IMR-90 (cell line): ENCODE measurements at regions of chr2 and their contacts with region 1.

Region 1: DNA sequence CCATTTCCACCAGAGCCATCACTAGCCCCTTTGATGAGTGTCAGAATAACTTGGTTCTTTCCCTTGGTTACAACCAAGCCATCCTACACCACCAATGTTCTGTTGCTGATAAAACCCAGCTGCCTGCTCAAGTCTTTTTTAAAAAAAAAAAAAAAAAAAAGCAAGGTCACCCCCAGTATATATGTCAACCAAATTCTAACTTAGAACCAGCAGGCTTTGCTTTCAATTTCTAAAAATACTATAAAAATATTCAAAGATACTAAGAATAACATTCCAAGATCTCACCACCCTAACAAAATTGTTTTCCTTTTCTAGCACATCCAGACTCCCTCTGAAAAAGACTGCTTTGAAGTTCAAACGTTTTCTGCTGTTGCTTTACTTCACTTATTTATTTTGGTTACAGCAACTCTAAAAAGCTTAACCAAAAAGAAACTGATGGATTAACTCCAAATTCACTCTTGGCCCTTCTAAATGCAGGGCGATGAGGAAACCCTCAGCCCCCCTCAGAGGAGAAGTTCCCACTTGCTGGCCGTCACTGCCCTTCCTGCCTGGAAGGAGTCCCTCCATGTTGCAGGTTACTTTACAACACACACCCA is 10.9 kb downstream of the UXS1 start:
- DNase-seq: peak; percentile 15
- ATAC-seq: peak; percentile 61
- H3K4me3 ChIP-seq: no peak overlapping the region
- H3K27ac ChIP-seq: no peak overlapping the region
- H3K4me1 ChIP-seq: peaks cover 5% of the 10 kb centered on the region
- H3K27me3 ChIP-seq: no peaks in the 10 kb centered on the region
- CTCF ChIP-seq: no peak
- POLR2A ChIP-seq: no peak
- RAD21 ChIP-seq: no peak

Region 2: GRCh38 chr2:106065268-106065982 is 117.8 kb before region 1 on chr2:
- CTCF ChIA-PET with region 1: no interaction called
- POLR2A ChIA-PET with region 1: no interaction called
- dilution Hi-C with region 1: no loop called
- in situ Hi-C with region 1: no loop called
- intact Hi-C with region 1: no loop called
- DNase-seq: no peak
- ATAC-seq: no peak; the same call in 1 of the 2 replicates
- H3K4me3 ChIP-seq: no peak overlapping the region; the same call in 1 of the 2 replicates
- H3K27ac ChIP-seq: no peak overlapping the region
- H3K4me1 ChIP-seq: no peaks in the 10 kb centered on the region
- H3K27me3 ChIP-seq: peaks cover 49% of the 10 kb centered on the region
- CTCF ChIP-seq: no peak
- POLR2A ChIP-seq: no peak
- RAD21 ChIP-seq: no peak

Region 3: GRCh38 chr2:106208874-106209273 is 25.7 kb after region 1 on chr2:
- CTCF ChIA-PET with region 1: no interaction called
- POLR2A ChIA-PET with region 1: no interaction called
- dilution Hi-C with region 1: no loop called
- in situ Hi-C with region 1: no loop called
- intact Hi-C with region 1: loop called (anchors 1 kb)
- DNase-seq: no peak
- ATAC-seq: no peak
- H3K4me3 ChIP-seq: no peak overlapping the region
- H3K27ac ChIP-seq: no peak overlapping the region
- H3K4me1 ChIP-seq: no peaks in the 10 kb centered on the region
- H3K27me3 ChIP-seq: peaks cover 2% of the 10 kb centered on the region
- CTCF ChIP-seq: no peak
- POLR2A ChIP-seq: no peak
- RAD21 ChIP-seq: no peak